Thyroid gland (tissue), 4 donors: ENCODE measurements at regions of chr5 and their contacts with region 1.

Region 1: GRCh38 chr5:179079165-179079987 is 19.2 kb downstream of the ZNF354C start:
- DNase-seq: no peak
- H3K4me3 ChIP-seq: no peak overlapping the region
- H3K27ac ChIP-seq: no peak overlapping the region
- H3K4me1 ChIP-seq: no peaks in the 10 kb centered on the region
- H3K27me3 ChIP-seq: no peaks in the 10 kb centered on the region
- CTCF ChIP-seq: no peak
- POLR2A ChIP-seq: no peak

Region 2: GRCh38 chr5:178711572-178711971 is 367.8 kb before region 1 on chr5:
- intact Hi-C with region 1: loop called (anchors 10 kb)
- DNase-seq: no peak
- H3K4me3 ChIP-seq: no peak overlapping the region
- H3K27ac ChIP-seq: no peak overlapping the region
- H3K4me1 ChIP-seq: no peaks in the 10 kb centered on the region
- H3K27me3 ChIP-seq: no peaks in the 10 kb centered on the region
- CTCF ChIP-seq: no peak
- POLR2A ChIP-seq: no peak

Region 3: GRCh38 chr5:178940569-178941360 is 138.6 kb before region 1 on chr5 and contains the start of gene ZNF454:
- intact Hi-C with region 1: loop called (anchors 5 kb)
- DNase-seq: peak; percentile 93 to 94
- H3K4me3 ChIP-seq: peak within 1 kb of the TSS; percentile 48 to 60 (median 59)
- H3K27ac ChIP-seq: peak within 1 kb of the TSS in 2 of 3 donors; percentile 53 to 58
- H3K4me1 ChIP-seq: peaks cover 0 to 7% of the 10 kb centered on the region in 2 donors
- H3K27me3 ChIP-seq: no peaks in the 10 kb centered on the region
- CTCF ChIP-seq: no peak
- POLR2A ChIP-seq: peak in 1 of 2 donors; percentile 43
- total RNA-seq, gene ZNF454: 2.0 to 5.1 (median 4.0) TPM